ENCODE measurements at regions of chr18 and their contacts with region 1.

Region 1: DNA sequence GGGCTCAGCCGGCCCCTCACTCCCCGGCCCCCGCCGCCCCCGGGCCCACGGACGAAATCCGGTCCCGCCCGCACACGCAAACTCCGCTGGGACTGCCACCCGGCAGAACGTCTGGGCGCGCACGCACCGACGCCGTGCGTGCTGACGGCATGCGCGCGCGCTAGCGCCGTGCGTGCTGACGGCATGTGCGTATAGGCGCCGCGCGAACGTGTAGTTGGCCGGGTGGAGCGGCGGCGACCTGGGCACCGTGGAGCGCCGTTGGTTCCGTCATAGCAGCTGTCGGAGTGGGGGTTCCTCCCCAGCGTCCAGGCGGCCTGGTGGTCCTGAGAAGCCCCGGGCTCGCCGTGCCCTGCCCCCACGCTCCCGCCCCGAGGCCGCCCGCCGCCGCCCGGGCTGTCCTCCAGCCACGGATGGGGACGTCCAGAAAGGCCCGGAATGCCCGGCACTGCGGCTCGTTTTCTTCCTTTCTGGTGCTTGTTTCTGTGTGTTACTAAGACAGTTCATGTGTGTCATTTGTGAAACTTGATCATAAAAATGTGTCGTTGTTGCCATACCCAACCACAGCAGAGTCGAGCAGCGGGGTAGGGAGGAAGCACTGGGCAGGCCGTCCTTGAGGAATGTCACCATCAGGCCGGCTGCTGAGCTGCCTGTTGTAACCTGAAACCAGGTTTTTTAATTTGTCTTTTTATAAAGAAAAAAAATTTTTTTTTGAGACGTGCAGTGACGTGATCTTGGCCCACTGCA is at the start of gene TXNL4A:
- DNase-seq: peak; percentile 93 to 94
- ATAC-seq: peak; percentile 98
- H3K4me3 ChIP-seq: peak within 1 kb of the TSS; percentile 61 to 69
- H3K27ac ChIP-seq: peak within 1 kb of the TSS; percentile 46 to 87
- H3K4me1 ChIP-seq: no peaks in the 10 kb centered on the region
- H3K27me3 ChIP-seq: no peaks in the 10 kb centered on the region
- total RNA-seq, gene TXNL4A: 71.7 to 72.0 TPM

Region 2: DNA sequence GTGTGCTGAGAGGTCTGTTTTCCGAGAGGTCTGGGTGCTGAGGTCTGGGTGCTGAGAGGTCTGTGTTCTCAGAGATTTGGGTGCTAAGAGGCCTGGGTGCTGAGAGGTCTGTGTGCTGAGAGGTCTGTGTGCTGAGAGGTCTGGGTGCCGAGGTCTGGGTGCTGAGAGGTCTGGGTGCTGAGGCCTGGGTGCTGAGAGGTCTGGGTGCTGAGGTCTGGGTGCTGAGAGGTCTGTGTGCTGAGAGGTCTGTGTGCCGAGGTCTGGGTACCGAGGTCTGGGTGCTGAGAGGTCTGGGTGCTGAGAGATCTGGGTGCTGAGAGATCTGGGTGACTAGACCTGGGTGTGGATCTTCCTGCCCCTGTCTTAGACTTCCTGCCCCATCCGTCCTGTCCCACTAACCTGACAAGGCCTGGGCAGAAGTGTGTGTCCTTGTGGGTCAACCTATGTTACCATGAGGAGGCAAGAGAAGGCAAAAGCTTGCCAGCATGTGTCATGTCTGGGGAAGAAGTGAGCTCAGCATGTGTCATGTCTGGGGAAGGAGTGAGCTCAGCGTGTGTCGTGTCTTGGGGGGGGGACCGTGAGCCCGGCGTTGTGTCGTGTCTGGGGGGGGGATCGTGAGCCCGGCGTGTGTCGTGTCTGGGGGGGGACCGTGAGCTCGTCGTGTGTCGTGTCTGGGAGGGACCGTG is 121.6 kb before region 1 on chr18:
- intact Hi-C with region 1: no loop called
- DNase-seq: no peak
- ATAC-seq: no peak
- H3K4me3 ChIP-seq: no peak overlapping the region
- H3K27ac ChIP-seq: no peak overlapping the region
- H3K4me1 ChIP-seq: no peaks in the 10 kb centered on the region
- H3K27me3 ChIP-seq: no peaks in the 10 kb centered on the region

Region 3: DNA sequence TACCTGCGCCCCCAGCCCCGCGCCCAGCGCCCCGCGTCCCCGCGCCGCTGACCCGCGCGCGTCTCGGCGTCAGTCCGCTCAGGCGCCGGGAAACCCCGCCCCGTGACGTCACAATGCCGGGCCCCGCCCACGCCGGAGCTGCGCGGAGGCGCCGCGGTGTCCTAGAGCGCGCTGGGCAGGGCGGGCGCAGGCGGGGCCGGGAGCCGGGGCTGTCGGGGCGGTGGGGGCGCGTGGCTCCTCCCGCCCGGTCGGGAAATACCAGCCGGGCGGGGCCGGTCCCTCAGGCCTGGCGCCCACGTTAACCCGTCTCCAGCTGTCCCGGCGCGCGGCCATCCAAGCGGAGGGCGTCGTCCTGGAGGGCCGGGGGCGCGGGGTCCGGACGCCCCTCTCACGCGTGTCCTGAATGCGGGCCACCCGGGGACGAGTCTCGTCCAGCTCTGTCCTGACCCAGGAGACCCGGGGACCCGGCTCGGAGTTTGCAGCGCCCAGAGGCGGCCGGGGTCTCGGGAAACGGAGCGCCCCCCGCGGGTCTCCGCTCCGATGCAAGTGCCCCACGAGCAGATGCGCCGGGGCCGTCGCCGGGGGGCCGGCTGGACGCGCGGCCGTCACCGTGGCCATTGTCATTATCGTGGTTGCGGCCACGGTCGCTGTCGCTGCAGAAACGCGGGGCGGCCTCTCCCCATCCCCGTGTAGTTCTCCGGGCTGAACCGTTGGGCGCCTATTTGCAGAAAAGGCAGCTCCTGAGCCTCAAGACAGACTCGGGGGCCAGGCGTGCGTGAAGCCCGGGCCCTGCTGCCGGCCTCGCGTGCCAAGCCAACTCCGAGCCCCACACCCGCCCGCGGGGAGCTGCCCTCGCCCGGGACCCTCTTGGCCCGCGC is 36.8 kb before region 1 on chr18 and contains the start of gene SLC66A2:
- intact Hi-C with region 1: loop called in 1 of 2 experiments (anchors 5 kb)
- DNase-seq: peak; percentile 95 to 99
- ATAC-seq: peak; percentile 96
- H3K4me3 ChIP-seq: peak within 1 kb of the TSS; percentile 85 to 95
- H3K27ac ChIP-seq: no peak within 1 kb of the TSS
- H3K4me1 ChIP-seq: peaks cover 0 to 3% of the 10 kb centered on the region in 2 donors
- H3K27me3 ChIP-seq: no peaks in the 10 kb centered on the region
- total RNA-seq, gene SLC66A2: 40.1 to 47.7 TPM

Region 4: GRCh38 chr18:80009661-80010550 is 21.3 kb after region 1 on chr18:
- intact Hi-C with region 1: loop called in 1 of 2 experiments (anchors 2 kb)
- DNase-seq: peak; percentile 87 to 89
- ATAC-seq: peak; percentile 87
- H3K4me3 ChIP-seq: no peak overlapping the region
- H3K27ac ChIP-seq: peak overlapping the region in 1 of 2 donors; percentile 34
- H3K4me1 ChIP-seq: no peaks in the 10 kb centered on the region
- H3K27me3 ChIP-seq: no peaks in the 10 kb centered on the region

Region 5: GRCh38 chr18:80108728-80109675 is 120.4 kb after region 1 on chr18 and contains the start of gene ADNP2:
- intact Hi-C with region 1: loop called (anchors 5 to 10 kb)
- DNase-seq: peak; percentile 88 to 90
- ATAC-seq: peak; percentile 87
- H3K4me3 ChIP-seq: peak within 1 kb of the TSS; percentile 97 to 99
- H3K27ac ChIP-seq: peak within 1 kb of the TSS; percentile 96 to 98
- H3K4me1 ChIP-seq: no peaks in the 10 kb centered on the region
- H3K27me3 ChIP-seq: no peaks in the 10 kb centered on the region
- total RNA-seq, gene ADNP2: 17.5 to 20.1 TPM

Region 6: GRCh38 chr18:80213173-80213572 is 224.6 kb after region 1 on chr18:
- intact Hi-C with region 1: no loop called
- DNase-seq: no peak
- ATAC-seq: no peak
- H3K4me3 ChIP-seq: no peak overlapping the region
- H3K27ac ChIP-seq: no peak overlapping the region
- H3K4me1 ChIP-seq: no peaks in the 10 kb centered on the region
- H3K27me3 ChIP-seq: no peaks in the 10 kb centered on the region